ENCODE measurements at regions of chr1 and their contacts with region 1.

Region 1: GRCh38 chr1:240169188-240169587 is 77.5 kb downstream of the FMN2 start:
- DNase-seq: no peak
- H3K4me3 ChIP-seq: no peak overlapping the region
- H3K27me3 ChIP-seq: no peaks in the 10 kb centered on the region
- CTCF ChIP-seq: peak; percentile 26

Region 2: DNA sequence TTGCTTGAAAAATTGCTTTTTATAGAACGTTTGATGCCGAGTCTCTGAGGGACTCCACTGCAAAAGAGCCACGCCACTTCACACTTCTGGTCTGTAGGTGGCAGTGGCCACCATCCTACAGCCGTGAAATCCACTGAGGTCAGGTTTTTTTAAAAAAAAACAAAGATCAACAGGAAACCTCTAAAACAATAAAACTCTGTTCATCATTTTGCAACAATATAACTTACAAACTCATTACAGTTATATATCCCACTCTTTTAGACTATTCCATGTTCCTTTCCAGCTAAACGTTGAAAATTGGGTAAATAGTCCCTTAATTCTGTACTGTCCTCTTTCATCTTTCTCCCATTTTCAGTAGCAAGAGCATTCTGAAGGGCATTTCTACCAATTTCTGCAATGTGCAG is 142.1 kb before region 1 on chr1:
- CTCF ChIA-PET with region 1: interaction called, 21 read pairs
- POLR2A ChIA-PET with region 1: no interaction called
- DNase-seq: no peak
- H3K4me3 ChIP-seq: no peak overlapping the region
- H3K27me3 ChIP-seq: no peaks in the 10 kb centered on the region
- CTCF ChIP-seq: peak; percentile 90

Region 3: DNA sequence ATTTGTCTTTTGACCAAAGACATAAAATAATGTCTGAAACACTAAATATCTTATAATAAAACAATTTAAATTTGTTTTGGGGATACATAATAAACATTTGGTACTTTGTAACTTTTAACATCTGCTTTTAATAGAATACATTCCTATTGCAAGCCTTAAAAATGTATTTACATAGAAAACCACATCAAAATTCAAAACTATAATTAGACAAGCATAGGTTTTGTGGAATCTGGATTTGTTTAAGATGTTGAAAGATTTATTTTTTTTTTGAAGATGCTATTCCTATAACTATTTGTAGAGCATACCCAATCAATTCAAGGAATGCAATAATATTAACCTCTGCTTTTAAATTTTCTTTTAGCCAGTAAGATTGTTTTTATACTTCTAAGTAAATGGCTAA is 48.2 kb after region 1 on chr1:
- CTCF ChIA-PET with region 1: no interaction called
- POLR2A ChIA-PET with region 1: no interaction called
- DNase-seq: peak; percentile 33
- H3K4me3 ChIP-seq: no peak overlapping the region
- H3K27me3 ChIP-seq: no peaks in the 10 kb centered on the region
- CTCF ChIP-seq: no peak

Region 4: GRCh38 chr1:240271081-240271480 is 101.9 kb after region 1 on chr1:
- CTCF ChIA-PET with region 1: no interaction called
- POLR2A ChIA-PET with region 1: no interaction called
- DNase-seq: no peak
- H3K4me3 ChIP-seq: no peak overlapping the region
- H3K27me3 ChIP-seq: no peaks in the 10 kb centered on the region
- CTCF ChIP-seq: no peak

Measured in BJ (cell line).